ENCODE measurements at regions of chr10 and their contacts with region 1.

Region 1: DNA sequence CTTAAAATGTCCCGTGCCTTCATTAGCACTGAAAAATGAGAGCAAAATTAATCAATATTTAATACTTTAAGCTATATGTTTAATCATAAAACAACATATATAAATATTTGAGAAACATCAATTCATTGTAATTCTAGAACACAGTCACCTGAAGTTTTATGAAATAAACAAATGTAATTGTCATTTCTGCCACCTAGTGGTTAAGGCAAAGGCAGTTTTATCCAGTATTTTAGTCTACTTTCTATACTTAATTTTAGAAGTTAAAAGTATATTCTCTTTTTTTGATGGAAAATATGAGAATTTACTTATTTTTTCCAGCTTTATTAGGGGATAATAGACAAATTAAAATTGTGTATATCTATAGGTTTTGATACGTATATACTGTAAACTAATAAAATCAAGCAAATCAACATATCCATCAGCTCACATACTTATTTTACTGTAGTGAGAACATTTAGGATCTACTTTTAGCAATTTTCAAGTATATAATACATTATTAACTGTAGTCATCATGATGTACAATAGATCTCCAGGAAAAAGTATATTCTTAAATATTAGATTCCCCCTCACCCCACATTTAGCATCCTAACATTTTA is 16.9 kb downstream of the PCGF6 start:
- DNase-seq: no peak
- ATAC-seq: no peak
- H3K4me3 Mint-ChIP-seq: no peak overlapping the region
- H3K27ac Mint-ChIP-seq: no peak overlapping the region
- H3K4me1 Mint-ChIP-seq: no peaks in the 10 kb centered on the region
- H3K27me3 Mint-ChIP-seq: no peaks in the 10 kb centered on the region
- CTCF ChIP-seq: no peak

Region 2: DNA sequence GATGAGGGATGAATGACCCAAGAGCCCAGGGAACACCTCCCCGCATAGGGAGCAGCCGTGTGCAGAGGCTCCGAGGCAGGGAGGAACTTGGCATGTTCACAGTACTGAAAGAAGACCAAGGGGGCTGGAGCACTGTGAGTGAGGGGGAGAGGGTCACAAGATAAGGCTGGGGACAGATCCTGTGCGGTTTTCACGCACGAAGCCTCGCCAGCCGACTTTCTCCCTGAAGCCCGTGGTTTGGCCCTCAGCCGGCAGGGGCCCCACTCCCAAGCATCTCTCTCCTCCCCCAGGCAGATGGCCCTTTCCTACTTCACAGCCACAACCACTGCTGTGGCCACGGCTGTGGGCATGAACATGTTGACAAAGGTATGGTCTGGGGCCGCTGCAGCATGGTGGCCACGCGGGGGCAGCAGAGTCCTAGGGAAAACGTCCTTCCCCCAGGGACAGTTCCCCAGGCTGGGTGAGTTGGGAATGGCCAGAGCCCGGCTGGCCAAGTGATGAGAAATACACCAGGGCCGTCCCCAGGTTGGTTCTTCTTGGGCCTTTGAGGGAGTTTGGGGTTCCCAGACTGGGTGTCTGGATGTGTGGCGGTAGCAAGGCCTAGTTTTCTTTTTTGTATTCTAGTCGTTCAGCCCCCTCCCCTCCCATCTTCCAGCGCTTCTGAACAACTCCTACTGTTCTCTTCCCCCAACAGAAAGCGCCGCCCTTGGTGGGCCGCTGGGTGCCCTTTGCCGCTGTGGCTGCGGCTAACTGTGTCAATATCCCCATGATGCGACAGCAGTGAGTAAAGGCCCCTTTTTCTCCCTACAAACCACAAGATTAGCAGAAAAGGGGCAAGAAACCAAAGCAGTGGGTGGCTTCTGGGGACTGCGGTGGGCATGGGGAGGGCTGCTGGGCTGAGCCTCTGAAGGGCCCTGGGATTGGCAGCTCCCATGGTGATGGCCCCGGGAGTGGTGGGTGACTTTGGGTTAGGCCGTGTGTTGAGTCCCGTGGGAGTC is 604.7 kb before region 1 on chr10:
- CTCF ChIA-PET with region 1: no interaction called
- POLR2A ChIA-PET with region 1: no interaction called
- intact Hi-C with region 1: loop called (anchors 1 kb)
- DNase-seq: peak; percentile 37
- ATAC-seq: peak; percentile 78
- H3K4me3 Mint-ChIP-seq: no peak overlapping the region
- H3K27ac Mint-ChIP-seq: no peak overlapping the region
- H3K4me1 Mint-ChIP-seq: no peaks in the 10 kb centered on the region
- H3K27me3 Mint-ChIP-seq: no peaks in the 10 kb centered on the region
- CTCF ChIP-seq: no peak

Region 3: DNA sequence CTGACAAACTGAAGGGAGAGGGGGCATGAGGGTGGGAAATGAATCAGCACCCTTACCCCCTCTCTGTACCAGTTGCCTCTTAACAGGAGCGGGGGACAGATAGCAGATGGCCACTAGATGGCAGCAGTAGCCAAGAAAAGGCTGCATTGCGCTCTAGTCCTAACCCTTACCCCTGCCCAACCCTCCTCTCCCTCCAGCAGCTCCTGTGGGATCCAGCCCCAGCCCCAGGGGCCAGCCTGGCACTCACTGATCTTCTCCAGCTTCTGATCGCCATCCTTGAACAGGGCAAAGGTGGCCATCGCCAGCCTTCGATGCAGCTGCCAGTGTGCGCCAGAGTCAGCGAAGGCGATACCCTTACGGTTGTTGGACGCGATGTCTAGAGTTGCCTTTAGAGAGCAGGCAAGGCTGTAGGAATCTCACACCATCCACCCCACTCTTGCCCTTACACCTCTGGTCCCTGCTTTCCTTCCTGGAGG is 499.0 kb before region 1 on chr10:
- CTCF ChIA-PET with region 1: interaction called, 4 read pairs
- POLR2A ChIA-PET with region 1: no interaction called
- intact Hi-C with region 1: loop called (anchors 1 kb)
- DNase-seq: peak; percentile 57
- ATAC-seq: peak; percentile 95
- H3K4me3 Mint-ChIP-seq: no peak overlapping the region
- H3K27ac Mint-ChIP-seq: no peak overlapping the region
- H3K4me1 Mint-ChIP-seq: peaks cover 2% of the 10 kb centered on the region
- H3K27me3 Mint-ChIP-seq: peaks cover 3% of the 10 kb centered on the region
- CTCF ChIP-seq: peak; percentile 21

Region 4: DNA sequence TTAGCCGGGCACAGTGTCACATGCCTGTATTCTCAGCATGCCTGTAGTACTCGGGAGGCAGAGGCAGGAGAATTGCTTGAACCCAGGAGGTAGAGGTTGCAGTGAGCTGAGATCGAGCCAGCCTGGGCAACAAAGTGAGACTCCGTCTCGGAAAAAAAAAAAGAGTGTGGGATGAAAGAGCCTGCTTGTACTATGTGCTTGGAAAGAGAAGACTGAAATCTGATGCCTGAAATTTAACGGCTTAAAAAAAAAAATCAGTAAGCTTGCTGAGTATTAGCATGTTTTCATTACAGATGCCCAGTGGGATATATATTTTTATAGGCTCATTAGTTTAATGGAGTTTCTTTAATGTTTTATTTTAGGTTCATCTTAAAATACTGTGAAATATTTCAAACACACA is 145.2 kb before region 1 on chr10:
- CTCF ChIA-PET with region 1: no interaction called
- POLR2A ChIA-PET with region 1: no interaction called
- intact Hi-C with region 1: no loop called
- DNase-seq: no peak
- ATAC-seq: no peak
- H3K4me3 Mint-ChIP-seq: no peak overlapping the region
- H3K27ac Mint-ChIP-seq: no peak overlapping the region
- H3K4me1 Mint-ChIP-seq: peaks cover 68% of the 10 kb centered on the region
- H3K27me3 Mint-ChIP-seq: no peaks in the 10 kb centered on the region
- CTCF ChIP-seq: no peak

Region 5: GRCh38 chr10:103491493-103492381 is 157.7 kb after region 1 on chr10:
- CTCF ChIA-PET with region 1: no interaction called
- POLR2A ChIA-PET with region 1: no interaction called
- intact Hi-C with region 1: no loop called
- DNase-seq: no peak
- ATAC-seq: no peak
- H3K4me3 Mint-ChIP-seq: no peak overlapping the region
- H3K27ac Mint-ChIP-seq: no peak overlapping the region
- H3K4me1 Mint-ChIP-seq: peaks cover 31% of the 10 kb centered on the region
- H3K27me3 Mint-ChIP-seq: peaks cover 24% of the 10 kb centered on the region
- CTCF ChIP-seq: no peak

Measured in activated B cell treated with CpG ODN at 0.5 μM for 24 hours (primary cell).